Activated B cell treated with CpG ODN at 0.5 μM for 24 hours (primary cell): ENCODE measurements at regions of chr3 and their contacts with region 1.

Region 1: DNA sequence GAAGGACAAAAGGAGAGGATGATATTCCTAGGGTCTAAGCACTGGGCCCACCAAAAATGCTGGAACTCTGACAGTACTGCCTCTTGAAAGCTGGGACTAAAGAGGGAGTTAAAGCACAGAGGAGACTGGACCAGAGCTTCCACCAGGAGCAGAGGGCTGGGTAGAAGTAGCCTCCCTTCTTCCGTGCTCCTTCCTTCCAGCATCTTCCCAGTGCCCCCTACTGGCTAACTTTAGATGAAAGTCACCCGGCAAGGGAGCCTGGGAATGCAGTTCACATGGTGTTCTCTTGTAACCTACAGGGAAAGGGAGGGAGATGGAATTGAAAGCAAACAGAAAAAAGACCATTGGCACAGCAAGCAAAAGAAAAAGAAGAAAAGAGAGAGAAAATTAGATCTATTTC is 106.1 kb upstream of the COL8A1 start:
- DNase-seq: no peak
- ATAC-seq: no peak
- H3K4me3 Mint-ChIP-seq: no peak overlapping the region
- H3K27ac Mint-ChIP-seq: no peak overlapping the region
- H3K4me1 Mint-ChIP-seq: no peaks in the 10 kb centered on the region
- H3K27me3 Mint-ChIP-seq: peaks cover 2% of the 10 kb centered on the region
- CTCF ChIP-seq: no peak

Region 2: GRCh38 chr3:99499235-99500158 is 32.7 kb before region 1 on chr3:
- CTCF ChIA-PET with region 1: no interaction called
- POLR2A ChIA-PET with region 1: no interaction called
- intact Hi-C with region 1: loop called (anchors 1 kb)
- DNase-seq: no peak
- ATAC-seq: no peak
- H3K4me3 Mint-ChIP-seq: no peak overlapping the region
- H3K27ac Mint-ChIP-seq: no peak overlapping the region
- H3K4me1 Mint-ChIP-seq: no peaks in the 10 kb centered on the region
- H3K27me3 Mint-ChIP-seq: no peaks in the 10 kb centered on the region
- CTCF ChIP-seq: no peak